Naive thymus-derived CD4-positive, alpha-beta T cell (primary cell): ENCODE measurements at regions of chr17 and their contacts with region 1.

Region 1: GRCh38 chr17:4891411-4892342 is 7.7 kb upstream of the C17orf107 start:
- DNase-seq: no peak
- ATAC-seq: no peak
- H3K4me3 ChIP-seq: no peak overlapping the region
- H3K4me3 Mint-ChIP-seq: no peak overlapping the region
- H3K27ac ChIP-seq: no peak overlapping the region
- H3K27ac Mint-ChIP-seq: no peak overlapping the region
- H3K4me1 ChIP-seq: no peaks in the 10 kb centered on the region
- H3K4me1 Mint-ChIP-seq: peaks cover 0 to 5% (median 2%) of the 10 kb centered on the region in 7 donors
- H3K27me3 ChIP-seq: no peaks in the 10 kb centered on the region
- H3K27me3 Mint-ChIP-seq: no peaks in the 10 kb centered on the region

Region 2: DNA sequence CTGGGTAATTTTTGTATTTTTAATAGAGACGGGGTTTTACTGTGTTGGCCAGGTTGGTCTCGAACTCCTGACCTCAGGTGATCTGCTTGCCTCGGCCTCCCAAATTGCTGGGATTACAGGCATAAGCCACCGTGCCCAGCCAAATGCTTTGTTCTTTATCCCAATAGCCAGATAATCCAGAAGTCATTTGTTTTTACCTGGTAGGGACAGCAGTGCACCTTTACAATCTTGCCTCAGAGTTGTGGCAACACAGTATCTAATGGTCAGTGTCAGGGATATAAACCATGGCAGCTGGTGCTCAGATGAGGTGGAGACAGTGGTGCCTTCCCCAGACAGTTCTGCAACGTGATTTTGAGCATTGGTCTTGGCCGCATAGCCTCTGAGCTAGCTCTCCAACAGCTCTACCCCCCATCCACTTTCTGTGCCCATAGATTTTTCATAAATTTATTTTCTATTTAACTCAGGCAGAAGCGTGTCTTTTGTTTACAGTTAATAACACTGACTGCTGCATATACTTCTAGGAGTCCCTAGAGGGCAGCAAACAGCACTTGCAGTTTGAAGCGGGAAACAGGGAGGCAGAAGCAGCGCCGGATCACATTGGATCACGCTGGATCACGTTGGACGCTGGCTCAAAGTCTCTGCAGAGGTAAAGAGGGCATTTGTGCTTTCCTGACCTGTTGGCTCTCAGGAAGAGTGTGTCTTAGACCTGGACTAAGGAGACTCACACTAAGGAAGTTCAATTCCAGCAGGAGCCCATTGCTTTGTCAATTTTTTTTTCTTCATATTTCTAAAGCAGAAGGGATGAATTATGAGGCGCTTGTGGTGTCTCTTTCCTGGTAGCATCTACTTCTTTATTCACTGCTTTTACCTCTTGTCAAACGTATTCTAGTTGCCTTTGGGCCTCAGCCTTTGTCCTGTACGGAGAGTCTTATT is 326.2 kb before region 1 on chr17:
- CTCF ChIA-PET with region 1: interaction called, 6 read pairs
- POLR2A ChIA-PET with region 1: no interaction called
- intact Hi-C with region 1: loop called in 1 of 2 experiments (anchors 1 kb)
- DNase-seq: peak in 8 of 9 donors; percentile 29 to 60 (median 50)
- ATAC-seq: peak; percentile 90
- H3K4me3 ChIP-seq: no peak overlapping the region
- H3K4me3 Mint-ChIP-seq: peak overlapping the region in 9 of 10 donors; percentile 44 to 77 (median 70)
- H3K27ac ChIP-seq: no peak overlapping the region
- H3K27ac Mint-ChIP-seq: peak overlapping the region in 3 of 9 donors; percentile 15 to 41 (median 21)
- H3K4me1 ChIP-seq: peaks cover 7 to 11% of the 10 kb centered on the region in 2 donors
- H3K4me1 Mint-ChIP-seq: peaks cover 15 to 40% (median 33%) of the 10 kb centered on the region in 7 donors
- H3K27me3 ChIP-seq: no peaks in the 10 kb centered on the region
- H3K27me3 Mint-ChIP-seq: peaks cover 0 to 17% (median 0%) of the 10 kb centered on the region in 5 donors

Region 3: GRCh38 chr17:4679658-4680057 is 212.0 kb before region 1 on chr17:
- CTCF ChIA-PET with region 1: no interaction called
- POLR2A ChIA-PET with region 1: no interaction called
- intact Hi-C with region 1: no loop called
- DNase-seq: no peak
- ATAC-seq: no peak
- H3K4me3 ChIP-seq: no peak overlapping the region
- H3K4me3 Mint-ChIP-seq: no peak overlapping the region
- H3K27ac ChIP-seq: no peak overlapping the region
- H3K27ac Mint-ChIP-seq: no peak overlapping the region
- H3K4me1 ChIP-seq: no peaks in the 10 kb centered on the region
- H3K4me1 Mint-ChIP-seq: peaks cover 0 to 15% (median 0%) of the 10 kb centered on the region in 7 donors
- H3K27me3 ChIP-seq: no peaks in the 10 kb centered on the region
- H3K27me3 Mint-ChIP-seq: no peaks in the 10 kb centered on the region

Region 4: DNA sequence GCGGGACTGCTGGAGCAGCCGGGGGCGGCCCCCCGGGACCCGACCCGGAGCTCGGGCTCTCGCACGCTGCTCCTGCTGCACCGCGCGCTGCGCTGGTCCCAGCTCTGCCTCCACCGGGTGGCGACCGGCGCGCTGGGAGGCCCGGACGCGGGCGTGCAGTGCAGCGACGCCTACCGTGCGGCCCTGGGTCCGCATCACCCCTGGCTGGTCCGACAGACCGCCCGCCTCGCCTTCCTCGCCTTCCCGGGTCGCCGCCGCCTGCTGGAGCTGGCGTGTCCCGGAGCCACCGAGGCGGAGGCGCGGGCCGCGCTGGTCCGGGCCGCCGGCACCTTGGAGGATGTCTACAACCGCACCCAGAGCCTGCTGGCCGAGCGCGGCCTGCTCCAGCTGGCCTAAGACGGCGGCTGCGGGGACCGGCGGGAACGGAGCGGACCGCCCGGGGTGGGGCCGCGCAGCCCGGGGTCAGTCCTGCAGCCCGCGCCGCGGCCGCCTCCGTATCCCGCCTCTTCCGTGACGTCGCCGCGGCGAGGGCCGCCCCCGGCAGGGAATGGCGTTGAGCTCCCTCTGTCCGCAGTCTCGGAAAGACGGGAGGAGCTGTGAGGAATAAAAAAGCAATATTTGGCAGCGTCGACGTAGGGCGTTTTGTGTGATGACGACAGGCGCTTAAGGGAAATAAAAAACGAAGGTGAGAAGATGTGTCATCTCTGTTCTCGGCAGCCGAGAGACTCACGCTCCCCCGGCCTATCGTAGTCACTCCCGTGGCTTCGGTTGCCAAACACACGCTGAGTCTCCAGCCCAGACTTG is 101.6 kb before region 1 on chr17:
- CTCF ChIA-PET with region 1: no interaction called
- POLR2A ChIA-PET with region 1: interaction called, 3 read pairs
- intact Hi-C with region 1: loop called (anchors 1 kb)
- DNase-seq: peak; percentile 66 to 87 (median 78)
- ATAC-seq: peak; percentile 93
- H3K4me3 ChIP-seq: peak overlapping the region; percentile 75
- H3K4me3 Mint-ChIP-seq: peak overlapping the region; percentile 67 to 94 (median 88)
- H3K27ac ChIP-seq: peak overlapping the region; percentile 73
- H3K27ac Mint-ChIP-seq: peak overlapping the region; percentile 1 to 93 (median 89)
- H3K4me1 ChIP-seq: peaks cover 15 to 20% of the 10 kb centered on the region in 2 donors
- H3K4me1 Mint-ChIP-seq: peaks cover 11 to 34% (median 19%) of the 10 kb centered on the region in 7 donors
- H3K27me3 ChIP-seq: peaks cover 0 to 11% of the 10 kb centered on the region in 2 donors
- H3K27me3 Mint-ChIP-seq: peaks cover 23 to 49% (median 31%) of the 10 kb centered on the region in 5 donors

Region 5: GRCh38 chr17:4806777-4807604 is 84.7 kb before region 1 on chr17 and contains the start of gene PLD2:
- CTCF ChIA-PET with region 1: no interaction called
- POLR2A ChIA-PET with region 1: no interaction called
- intact Hi-C with region 1: loop called (anchors 2 to 5 kb)
- DNase-seq: peak; percentile 71 to 95 (median 80)
- ATAC-seq: peak; percentile 100
- H3K4me3 ChIP-seq: peak within 1 kb of the TSS; percentile 47
- H3K4me3 Mint-ChIP-seq: peak within 1 kb of the TSS; percentile 71 to 88 (median 80)
- H3K27ac ChIP-seq: peak within 1 kb of the TSS; percentile 79
- H3K27ac Mint-ChIP-seq: peak within 1 kb of the TSS in 7 of 9 donors; percentile 48 to 78 (median 62)
- H3K4me1 ChIP-seq: peaks cover 0 to 5% of the 10 kb centered on the region in 2 donors
- H3K4me1 Mint-ChIP-seq: peaks cover 7 to 23% (median 19%) of the 10 kb centered on the region in 7 donors
- H3K27me3 ChIP-seq: no peaks in the 10 kb centered on the region
- H3K27me3 Mint-ChIP-seq: peaks cover 0 to 7% (median 0%) of the 10 kb centered on the region in 5 donors
- total RNA-seq, gene PLD2: 22.9 to 42.7 (median 26.8) TPM